ENCODE measurements at regions of chr17 and their contacts with region 1.

Region 1: GRCh38 chr17:72556944-72557826 is 436.4 kb downstream of the SOX9 start:
- DNase-seq: peak; percentile 85
- ATAC-seq: peak; percentile 82
- H3K4me3 Mint-ChIP-seq: no peak overlapping the region
- H3K27ac Mint-ChIP-seq: no peak overlapping the region
- H3K4me1 Mint-ChIP-seq: peaks cover 6% of the 10 kb centered on the region
- H3K27me3 Mint-ChIP-seq: no peaks in the 10 kb centered on the region
- CTCF ChIP-seq: peak; percentile 88

Region 2: GRCh38 chr17:72287586-72287985 is 269.6 kb before region 1 on chr17:
- CTCF ChIA-PET with region 1: no interaction called
- POLR2A ChIA-PET with region 1: no interaction called
- DNase-seq: no peak
- ATAC-seq: no peak
- H3K4me3 Mint-ChIP-seq: no peak overlapping the region
- H3K27ac Mint-ChIP-seq: no peak overlapping the region
- H3K4me1 Mint-ChIP-seq: peaks cover 17% of the 10 kb centered on the region
- H3K27me3 Mint-ChIP-seq: no peaks in the 10 kb centered on the region
- CTCF ChIP-seq: no peak

Region 3: GRCh38 chr17:72397687-72398086 is 159.5 kb before region 1 on chr17:
- CTCF ChIA-PET with region 1: no interaction called
- POLR2A ChIA-PET with region 1: no interaction called
- DNase-seq: no peak
- ATAC-seq: no peak
- H3K4me3 Mint-ChIP-seq: no peak overlapping the region
- H3K27ac Mint-ChIP-seq: no peak overlapping the region
- H3K4me1 Mint-ChIP-seq: peaks cover 18% of the 10 kb centered on the region
- H3K27me3 Mint-ChIP-seq: peaks cover 12% of the 10 kb centered on the region
- CTCF ChIP-seq: no peak

Region 4: GRCh38 chr17:72492494-72492893 is 64.7 kb before region 1 on chr17:
- CTCF ChIA-PET with region 1: no interaction called
- POLR2A ChIA-PET with region 1: no interaction called
- DNase-seq: no peak
- ATAC-seq: no peak
- H3K4me3 Mint-ChIP-seq: no peak overlapping the region
- H3K27ac Mint-ChIP-seq: no peak overlapping the region
- H3K4me1 Mint-ChIP-seq: peaks cover 7% of the 10 kb centered on the region
- H3K27me3 Mint-ChIP-seq: peaks cover 3% of the 10 kb centered on the region; the same call in 1 of the 2 replicates
- CTCF ChIP-seq: no peak

Region 5: DNA sequence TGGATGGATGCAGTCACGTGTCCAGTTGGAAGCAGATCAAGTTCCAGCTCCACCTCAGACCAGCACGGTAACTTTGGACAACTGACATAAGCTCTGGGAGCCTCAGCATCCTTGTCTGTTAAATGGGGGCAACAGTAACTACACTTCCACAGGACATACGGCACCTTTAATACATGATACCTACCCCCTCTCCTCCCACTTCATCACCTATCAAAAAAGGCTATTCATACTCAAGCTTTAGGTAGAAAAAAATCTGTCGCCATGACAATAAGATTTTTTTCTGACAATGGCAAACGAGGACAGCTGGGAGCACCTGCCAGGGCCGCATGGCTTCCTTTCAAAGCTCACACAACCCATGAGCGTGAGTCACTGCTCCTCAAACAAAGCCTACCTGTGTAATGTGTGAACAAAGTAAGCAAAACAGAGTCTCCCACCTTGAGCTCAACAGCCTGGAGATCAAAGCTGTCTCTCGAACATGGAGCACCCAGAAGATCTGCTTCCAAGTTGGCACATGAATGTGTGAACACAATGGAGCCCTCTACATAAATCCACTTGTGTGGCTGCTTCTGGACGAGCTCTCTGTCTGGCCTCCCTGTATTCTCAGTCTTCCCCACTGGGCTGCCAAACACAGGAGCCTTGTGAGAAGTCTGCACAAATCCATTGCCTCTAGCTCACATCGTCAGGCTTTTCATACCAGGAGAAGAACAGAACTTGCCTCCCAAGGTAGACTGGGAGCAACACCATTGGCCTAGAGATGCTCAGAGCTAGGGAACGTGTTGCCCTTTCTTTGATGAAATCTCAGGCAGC is 23.3 kb after region 1 on chr17:
- CTCF ChIA-PET with region 1: interaction called, 11 read pairs
- POLR2A ChIA-PET with region 1: no interaction called
- DNase-seq: no peak
- ATAC-seq: no peak
- H3K4me3 Mint-ChIP-seq: no peak overlapping the region
- H3K27ac Mint-ChIP-seq: no peak overlapping the region
- H3K4me1 Mint-ChIP-seq: peaks cover 17% of the 10 kb centered on the region
- H3K27me3 Mint-ChIP-seq: no peaks in the 10 kb centered on the region; the same call in 1 of the 2 replicates
- CTCF ChIP-seq: no peak

Region 6: DNA sequence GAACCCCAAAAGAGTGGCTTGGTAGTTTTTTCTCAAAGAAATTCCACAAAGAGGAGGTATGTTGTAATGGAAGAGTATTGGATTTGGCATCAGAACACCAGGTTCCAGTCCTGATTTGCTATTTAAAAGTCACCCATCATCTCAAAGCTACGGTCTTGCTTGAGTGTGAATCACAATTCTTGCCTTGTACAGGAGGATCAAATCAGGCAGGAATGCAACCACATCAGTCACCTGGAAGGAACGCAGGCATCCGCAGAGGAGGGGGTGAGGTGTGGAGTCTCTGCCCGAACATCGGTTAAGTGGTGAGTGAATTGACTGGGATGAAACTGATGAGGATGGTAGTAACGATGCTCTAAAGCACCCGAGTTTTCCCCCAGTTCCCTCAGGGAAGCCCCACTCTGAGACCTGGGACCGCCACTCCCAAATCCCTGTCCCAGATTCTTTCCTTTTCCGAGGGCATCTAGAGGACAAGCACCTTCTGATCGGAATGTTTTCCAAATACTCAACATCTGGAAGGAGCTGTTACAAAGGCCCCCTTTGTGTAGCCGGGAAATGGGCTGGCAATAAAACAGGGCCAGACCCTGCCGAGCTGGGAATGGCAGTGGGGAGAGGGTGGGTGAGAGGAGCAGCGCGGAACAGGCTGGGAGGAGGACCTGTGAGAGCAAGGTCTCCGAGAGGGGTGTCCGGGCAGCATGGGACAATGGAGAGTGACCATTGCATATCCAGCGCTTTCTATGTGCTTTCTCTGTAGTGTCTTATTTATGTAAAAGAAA is 65.7 kb after region 1 on chr17:
- CTCF ChIA-PET with region 1: interaction called, 13 read pairs
- POLR2A ChIA-PET with region 1: no interaction called
- DNase-seq: no peak
- ATAC-seq: peak; percentile 58; the same call in 1 of the 2 replicates
- H3K4me3 Mint-ChIP-seq: no peak overlapping the region
- H3K27ac Mint-ChIP-seq: no peak overlapping the region
- H3K4me1 Mint-ChIP-seq: peaks cover 22% of the 10 kb centered on the region
- H3K27me3 Mint-ChIP-seq: no peaks in the 10 kb centered on the region; the same call in none of the 2 replicates
- CTCF ChIP-seq: no peak

Region 7: GRCh38 chr17:72687886-72688285 is 130.7 kb after region 1 on chr17:
- CTCF ChIA-PET with region 1: interaction called, 15 read pairs
- POLR2A ChIA-PET with region 1: no interaction called
- DNase-seq: no peak
- ATAC-seq: no peak
- H3K4me3 Mint-ChIP-seq: no peak overlapping the region
- H3K27ac Mint-ChIP-seq: no peak overlapping the region
- H3K4me1 Mint-ChIP-seq: no peaks in the 10 kb centered on the region
- H3K27me3 Mint-ChIP-seq: no peaks in the 10 kb centered on the region
- CTCF ChIP-seq: no peak

Region 8: DNA sequence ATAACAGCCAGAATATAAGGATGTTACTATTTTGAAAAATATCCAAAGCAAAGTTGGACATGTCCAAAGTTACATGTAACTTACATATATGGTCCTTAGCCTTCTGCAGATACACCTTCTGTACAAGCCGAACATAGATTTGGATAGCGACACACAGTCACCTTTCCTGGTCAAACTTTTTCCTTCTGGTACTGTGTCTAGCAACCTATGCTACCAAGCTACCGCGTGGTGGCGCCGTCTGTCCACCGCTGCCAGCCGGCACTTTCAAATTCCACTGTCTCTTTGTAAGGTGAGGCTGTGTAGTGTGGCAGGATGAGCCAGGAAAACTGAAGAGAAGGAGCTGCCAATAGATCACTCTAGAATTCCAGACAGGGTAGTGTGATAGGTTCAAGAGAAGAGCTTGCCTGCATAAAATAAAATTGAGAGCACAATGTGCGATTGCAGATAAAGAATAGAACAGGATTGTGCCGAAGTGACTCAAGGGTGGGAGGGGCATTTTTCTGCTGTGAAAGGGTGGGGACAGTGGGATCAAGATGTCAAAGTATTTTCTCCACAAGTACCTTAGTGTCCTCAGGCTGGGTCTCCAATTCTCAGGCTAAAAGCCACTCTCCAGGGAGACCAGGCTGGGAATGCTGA is 168.4 kb after region 1 on chr17:
- CTCF ChIA-PET with region 1: interaction called, 147 read pairs
- POLR2A ChIA-PET with region 1: no interaction called
- DNase-seq: peak; percentile 64
- ATAC-seq: peak; percentile 77
- H3K4me3 Mint-ChIP-seq: no peak overlapping the region
- H3K27ac Mint-ChIP-seq: peak overlapping the region; percentile 50; the same call in 1 of the 2 replicates
- H3K4me1 Mint-ChIP-seq: peaks cover 48% of the 10 kb centered on the region
- H3K27me3 Mint-ChIP-seq: no peaks in the 10 kb centered on the region
- CTCF ChIP-seq: peak; percentile 87

Region 9: GRCh38 chr17:73165616-73166404 is 608.6 kb after region 1 on chr17:
- CTCF ChIA-PET with region 1: interaction called, 14 read pairs
- POLR2A ChIA-PET with region 1: no interaction called
- DNase-seq: peak; percentile 38
- ATAC-seq: peak; percentile 2; the same call in 1 of the 2 replicates
- H3K4me3 Mint-ChIP-seq: peak overlapping the region; percentile 85
- H3K27ac Mint-ChIP-seq: no peak overlapping the region
- H3K4me1 Mint-ChIP-seq: peaks cover 50% of the 10 kb centered on the region
- H3K27me3 Mint-ChIP-seq: peaks cover 74% of the 10 kb centered on the region
- CTCF ChIP-seq: no peak

Measured in WTC11 (cell line).